ENCODE measurements at regions of chr1 and their contacts with region 1.

Region 1: DNA sequence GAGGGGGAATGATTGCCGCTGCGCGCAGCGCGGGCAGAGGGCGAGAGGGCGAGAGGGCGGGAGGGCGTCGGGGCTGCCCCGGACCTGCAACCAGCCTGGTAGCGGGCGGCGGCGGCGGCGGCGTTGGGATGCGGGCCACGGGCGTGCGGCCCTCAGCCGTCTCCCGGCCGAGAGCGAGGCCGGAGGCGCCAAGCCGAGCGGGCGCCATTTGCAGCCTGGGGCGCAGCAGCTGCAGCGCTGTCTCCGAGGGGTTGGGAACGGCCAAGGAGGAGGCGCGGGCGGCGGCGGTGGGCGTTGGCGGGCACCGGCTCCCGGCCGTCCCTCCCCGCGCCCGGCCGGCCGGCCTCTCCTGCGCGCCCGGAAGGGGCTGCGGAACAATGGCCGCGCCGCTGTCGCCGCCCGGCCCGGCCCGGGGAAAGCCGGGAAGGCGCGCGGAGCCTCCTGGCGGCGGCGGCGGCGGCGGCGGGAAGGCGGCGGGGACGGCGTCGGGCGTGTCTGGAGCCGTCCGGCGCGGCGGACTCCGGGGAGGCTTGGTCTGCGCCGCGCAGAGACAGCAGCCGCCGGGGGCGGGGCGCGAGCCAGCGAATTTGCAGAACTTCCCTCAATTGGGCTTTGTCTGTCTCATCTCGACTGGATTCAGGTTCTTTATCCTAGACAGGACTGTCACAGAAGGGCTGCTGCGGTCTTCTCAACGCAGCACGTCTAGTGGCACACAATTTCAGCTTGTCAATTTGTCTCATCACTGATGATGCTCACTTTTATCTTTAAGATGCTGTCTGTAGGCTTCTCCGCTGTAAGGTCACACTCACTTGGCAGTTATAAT is 35.7 kb downstream of the ZBTB8B start:
- DNase-seq: peak; percentile 68
- ATAC-seq: peak; percentile 93
- H3K4me3 ChIP-seq: peak overlapping the region; percentile 82
- H3K27ac ChIP-seq: peak overlapping the region; percentile 51
- H3K4me1 ChIP-seq: no peaks in the 10 kb centered on the region
- H3K27me3 ChIP-seq: no peaks in the 10 kb centered on the region
- CTCF ChIP-seq: no peak

Region 2: GRCh38 chr1:32448773-32449456 is 51.7 kb before region 1 on chr1:
- CTCF ChIA-PET with region 1: no interaction called
- POLR2A ChIA-PET with region 1: no interaction called
- intact Hi-C with region 1: loop called (anchors 1 kb)
- DNase-seq: peak; percentile 53
- ATAC-seq: peak; percentile 65
- H3K4me3 ChIP-seq: no peak overlapping the region
- H3K27ac ChIP-seq: peak overlapping the region; percentile 27; the same call in 1 of the 2 replicates
- H3K4me1 ChIP-seq: peaks cover 8% of the 10 kb centered on the region; the same call in 1 of the 2 replicates
- H3K27me3 ChIP-seq: no peaks in the 10 kb centered on the region
- CTCF ChIP-seq: peak; percentile 68

Region 3: DNA sequence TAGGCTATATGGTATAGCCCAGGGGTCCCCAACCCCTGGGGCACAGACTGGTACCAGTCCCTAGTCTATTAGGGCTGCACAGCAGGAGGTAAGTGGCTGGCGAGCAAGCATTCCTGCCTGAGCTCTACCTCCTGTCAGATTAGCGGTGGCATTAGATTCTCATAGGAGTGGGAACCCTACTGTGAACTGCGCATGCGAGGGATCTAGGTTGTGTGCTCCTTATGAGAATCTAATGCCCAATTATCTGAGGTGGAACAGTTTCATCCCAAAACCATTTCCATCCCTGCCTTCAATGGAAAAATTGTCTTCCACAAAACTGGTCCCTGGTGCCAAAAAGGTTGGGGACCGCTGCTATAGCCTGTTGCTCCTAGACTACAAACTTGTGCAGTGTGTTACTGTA is 15.8 kb after region 1 on chr1:
- CTCF ChIA-PET with region 1: no interaction called
- POLR2A ChIA-PET with region 1: no interaction called
- intact Hi-C with region 1: no loop called
- DNase-seq: no peak
- ATAC-seq: no peak
- H3K4me3 ChIP-seq: no peak overlapping the region
- H3K27ac ChIP-seq: no peak overlapping the region
- H3K4me1 ChIP-seq: no peaks in the 10 kb centered on the region
- H3K27me3 ChIP-seq: no peaks in the 10 kb centered on the region
- CTCF ChIP-seq: no peak